ENCODE measurements at regions of chr16 and their contacts with region 1.

Region 1: DNA sequence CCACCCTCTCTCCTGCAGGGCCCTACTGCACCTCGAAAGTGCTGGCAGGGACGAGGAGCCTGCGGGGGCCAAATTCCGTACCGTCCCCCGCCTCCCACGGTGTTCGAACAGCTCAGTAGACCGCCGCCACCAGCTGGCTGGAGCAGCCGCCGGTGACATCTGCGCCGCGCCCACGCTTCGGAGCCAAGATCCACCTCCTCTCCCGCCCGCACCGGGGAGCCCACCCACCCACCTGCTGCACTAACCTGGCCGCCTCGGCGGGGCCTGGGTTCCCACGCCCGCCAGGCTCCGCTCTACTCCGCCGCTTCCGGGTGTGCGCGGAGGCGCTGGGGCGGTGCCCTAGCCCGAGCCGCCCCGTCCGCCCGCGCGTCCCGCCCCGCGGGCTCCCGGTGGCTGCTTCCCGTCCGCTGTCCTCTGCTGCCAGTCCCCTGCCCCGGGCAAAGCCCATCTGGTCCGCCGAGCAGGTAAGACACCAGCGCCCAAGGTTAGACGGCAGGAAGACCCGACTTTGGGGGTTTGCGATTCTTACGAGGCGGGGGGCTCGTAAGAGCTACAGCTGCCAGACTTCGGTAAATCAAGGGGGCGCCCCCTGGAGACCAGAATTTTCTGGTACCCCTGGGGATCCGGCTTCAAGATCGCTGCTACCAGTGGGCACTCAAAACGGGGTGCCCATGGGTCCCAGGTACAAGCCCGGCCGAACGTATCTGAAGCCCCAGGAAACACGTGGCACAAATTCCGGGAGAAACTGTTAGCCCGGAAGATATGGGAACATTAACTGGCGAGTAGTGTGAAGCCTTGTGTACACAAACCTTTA is at the starts of genes FBXL8 and TRADD:
- DNase-seq: peak; percentile 89
- ATAC-seq: peak; percentile 76
- H3K4me3 Mint-ChIP-seq: peak within 1 kb of the TSS; percentile 92
- H3K27ac Mint-ChIP-seq: peak within 1 kb of the TSS; percentile 97
- H3K4me1 Mint-ChIP-seq: peaks cover 62% of the 10 kb centered on the region
- H3K27me3 Mint-ChIP-seq: peaks cover 13% of the 10 kb centered on the region
- total RNA-seq, gene FBXL8: 15.7 to 24.5 TPM
- total RNA-seq, gene TRADD: 36.4 to 52.6 TPM

Region 2: GRCh38 chr16:66961065-66961744 is 198.6 kb before region 1 on chr16 and contains the start of gene CES3:
- CTCF ChIA-PET with region 1: interaction called, 28 read pairs
- DNase-seq: peak; percentile 84
- ATAC-seq: peak; percentile 96
- H3K4me3 Mint-ChIP-seq: peak within 1 kb of the TSS; percentile 56
- H3K27ac Mint-ChIP-seq: peak within 1 kb of the TSS; percentile 72
- H3K4me1 Mint-ChIP-seq: peaks cover 29% of the 10 kb centered on the region
- H3K27me3 Mint-ChIP-seq: no peaks in the 10 kb centered on the region
- total RNA-seq, gene CES3: 2.3 to 4.5 TPM

Region 3: GRCh38 chr16:67028555-67029248 is 131.1 kb before region 1 on chr16 and contains the start of gene CBFB:
- CTCF ChIA-PET with region 1: interaction called, 395 read pairs
- DNase-seq: peak; percentile 95
- ATAC-seq: peak; percentile 94
- H3K4me3 Mint-ChIP-seq: peak within 1 kb of the TSS; percentile 92
- H3K27ac Mint-ChIP-seq: peak within 1 kb of the TSS; percentile 94
- H3K4me1 Mint-ChIP-seq: peaks cover 48% of the 10 kb centered on the region
- H3K27me3 Mint-ChIP-seq: no peaks in the 10 kb centered on the region
- total RNA-seq, gene CBFB: 180 to 196 TPM

Region 4: DNA sequence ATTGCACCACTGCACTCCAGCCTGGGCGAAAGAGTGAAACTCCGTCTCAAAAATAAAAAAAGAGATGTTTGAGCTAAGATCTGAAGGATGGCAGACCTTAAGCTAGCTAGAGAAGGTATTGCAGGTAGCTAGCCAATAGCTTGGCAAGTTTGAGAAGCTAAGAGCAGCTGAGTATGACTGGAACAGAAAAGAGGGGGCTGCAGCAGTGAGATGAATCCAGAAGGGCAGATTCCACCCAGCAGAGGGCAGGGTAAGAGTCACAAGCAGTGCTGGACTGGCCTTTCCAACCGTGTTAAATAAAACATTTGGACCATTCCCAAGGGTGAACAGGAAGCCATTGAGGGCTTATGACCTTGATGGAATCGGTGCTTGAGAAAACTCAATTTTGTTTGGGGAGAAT is 55.7 kb before region 1 on chr16:
- CTCF ChIA-PET with region 1: interaction called, 47 read pairs
- DNase-seq: no peak
- ATAC-seq: no peak
- H3K4me3 Mint-ChIP-seq: no peak overlapping the region
- H3K27ac Mint-ChIP-seq: no peak overlapping the region
- H3K4me1 Mint-ChIP-seq: peaks cover 6% of the 10 kb centered on the region
- H3K27me3 Mint-ChIP-seq: no peaks in the 10 kb centered on the region

Region 5: DNA sequence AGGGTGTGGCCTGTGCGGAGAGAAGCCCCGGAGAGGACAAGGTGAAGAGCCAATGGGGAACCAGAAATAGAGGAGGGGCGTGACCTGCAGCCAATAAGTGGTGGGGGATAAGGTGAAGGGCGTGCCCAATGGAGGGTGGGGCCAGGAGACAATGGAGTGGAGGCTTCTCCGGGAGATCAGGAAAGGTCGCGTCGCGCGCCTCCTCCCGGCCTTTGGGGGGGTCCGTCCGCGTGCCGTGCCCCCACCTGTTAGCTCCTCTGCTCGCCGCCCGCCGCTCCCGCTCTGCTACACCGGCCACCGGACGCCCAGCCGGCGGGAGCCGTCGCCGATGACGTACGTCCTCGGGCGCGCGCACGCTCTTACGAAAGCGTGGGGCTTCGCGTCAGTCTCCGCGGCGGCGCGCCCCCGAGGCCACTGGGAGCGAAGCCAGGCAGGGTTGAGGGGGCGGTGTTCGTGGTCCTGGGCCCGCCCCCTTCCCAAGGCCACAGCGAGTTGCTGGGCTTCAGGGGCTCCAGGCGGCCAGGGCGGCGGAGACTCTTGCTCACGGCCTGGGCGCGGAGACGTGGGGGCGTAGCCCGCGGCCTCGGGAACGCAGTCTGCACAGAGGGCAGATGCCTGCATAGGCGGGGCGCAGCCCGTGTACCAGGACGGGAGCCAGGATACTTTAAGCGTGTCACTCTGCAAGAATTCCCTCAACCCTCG is 24.0 kb after region 1 on chr16 and contains the start of gene MATCAP1:
- CTCF ChIA-PET with region 1: interaction called, 72 read pairs
- DNase-seq: peak; percentile 98
- ATAC-seq: peak; percentile 96
- H3K4me3 Mint-ChIP-seq: peak within 1 kb of the TSS; percentile 31
- H3K27ac Mint-ChIP-seq: no peak within 1 kb of the TSS
- H3K4me1 Mint-ChIP-seq: peaks cover 17% of the 10 kb centered on the region
- H3K27me3 Mint-ChIP-seq: peaks cover 18% of the 10 kb centered on the region
- total RNA-seq, gene MATCAP1: 38.6 to 56.0 TPM

Measured in activated CD8-positive, alpha-beta memory T cell treated with anti-CD3 and anti-CD28 coated beads, Interleukin-2, amount 10 ng/mL, durations not matched to agents 7 days and 5 days (primary cell).